ENCODE measurements at regions of chr17 and their contacts with region 1.

Region 1: GRCh38 chr17:75338335-75338734 is 49.1 kb upstream of the SLC25A19 start:
- DNase-seq: peak; percentile 44
- ATAC-seq: no peak
- H3K4me3 ChIP-seq: peak overlapping the region in 1 of 5 experiments; percentile 41
- H3K4me3 Mint-ChIP-seq: peak overlapping the region; percentile 71
- H3K27ac ChIP-seq: peak overlapping the region; percentile 68 to 97
- H3K27ac Mint-ChIP-seq: peak overlapping the region; percentile 88
- H3K4me1 ChIP-seq: peaks cover 84 to 92% of the 10 kb centered on the region in 2 donors
- H3K4me1 Mint-ChIP-seq: peaks cover 78% of the 10 kb centered on the region
- H3K27me3 ChIP-seq: no peaks in the 10 kb centered on the region
- H3K27me3 Mint-ChIP-seq: no peaks in the 10 kb centered on the region
- CTCF ChIP-seq: no peak

Region 2: GRCh38 chr17:75380315-75380714 is 42.0 kb after region 1 on chr17:
- CTCF ChIA-PET with region 1: interaction called, 11 read pairs
- POLR2A ChIA-PET with region 1: no interaction called
- intact Hi-C with region 1: no loop called
- DNase-seq: no peak
- ATAC-seq: no peak
- H3K4me3 ChIP-seq: no peak overlapping the region
- H3K4me3 Mint-ChIP-seq: no peak overlapping the region
- H3K27ac ChIP-seq: peak overlapping the region in 1 of 2 donors; percentile 68
- H3K27ac Mint-ChIP-seq: no peak overlapping the region
- H3K4me1 ChIP-seq: peaks cover 54 to 56% of the 10 kb centered on the region in 2 donors
- H3K4me1 Mint-ChIP-seq: peaks cover 65% of the 10 kb centered on the region
- H3K27me3 ChIP-seq: no peaks in the 10 kb centered on the region
- H3K27me3 Mint-ChIP-seq: no peaks in the 10 kb centered on the region
- CTCF ChIP-seq: no peak